ENCODE measurements at regions of chr17 and their contacts with region 1.

Region 1: GRCh38 chr17:72592242-72592966 is 471.6 kb downstream of the SOX9 start:
- DNase-seq: peak; percentile 87 to 90
- H3K4me3 ChIP-seq: peak overlapping the region; percentile 65
- H3K4me3 Mint-ChIP-seq: peak overlapping the region; percentile 74
- H3K27ac Mint-ChIP-seq: peak overlapping the region; percentile 55
- H3K4me1 ChIP-seq: peaks cover 20% of the 10 kb centered on the region
- H3K4me1 Mint-ChIP-seq: peaks cover 25% of the 10 kb centered on the region
- H3K27me3 ChIP-seq: no peaks in the 10 kb centered on the region; the same call in 1 of the 2 replicates
- H3K27me3 Mint-ChIP-seq: peaks cover 3% of the 10 kb centered on the region
- CTCF ChIP-seq: peak in 1 of 2 experiments; percentile 4

Region 2: DNA sequence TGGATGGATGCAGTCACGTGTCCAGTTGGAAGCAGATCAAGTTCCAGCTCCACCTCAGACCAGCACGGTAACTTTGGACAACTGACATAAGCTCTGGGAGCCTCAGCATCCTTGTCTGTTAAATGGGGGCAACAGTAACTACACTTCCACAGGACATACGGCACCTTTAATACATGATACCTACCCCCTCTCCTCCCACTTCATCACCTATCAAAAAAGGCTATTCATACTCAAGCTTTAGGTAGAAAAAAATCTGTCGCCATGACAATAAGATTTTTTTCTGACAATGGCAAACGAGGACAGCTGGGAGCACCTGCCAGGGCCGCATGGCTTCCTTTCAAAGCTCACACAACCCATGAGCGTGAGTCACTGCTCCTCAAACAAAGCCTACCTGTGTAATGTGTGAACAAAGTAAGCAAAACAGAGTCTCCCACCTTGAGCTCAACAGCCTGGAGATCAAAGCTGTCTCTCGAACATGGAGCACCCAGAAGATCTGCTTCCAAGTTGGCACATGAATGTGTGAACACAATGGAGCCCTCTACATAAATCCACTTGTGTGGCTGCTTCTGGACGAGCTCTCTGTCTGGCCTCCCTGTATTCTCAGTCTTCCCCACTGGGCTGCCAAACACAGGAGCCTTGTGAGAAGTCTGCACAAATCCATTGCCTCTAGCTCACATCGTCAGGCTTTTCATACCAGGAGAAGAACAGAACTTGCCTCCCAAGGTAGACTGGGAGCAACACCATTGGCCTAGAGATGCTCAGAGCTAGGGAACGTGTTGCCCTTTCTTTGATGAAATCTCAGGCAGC is 11.9 kb before region 1 on chr17:
- CTCF ChIA-PET with region 1: interaction called, 7 read pairs
- POLR2A ChIA-PET with region 1: interaction called, 24 read pairs
- intact Hi-C with region 1: no loop called
- DNase-seq: peak; percentile 78 to 86
- H3K4me3 ChIP-seq: no peak overlapping the region
- H3K4me3 Mint-ChIP-seq: peak overlapping the region; percentile 7
- H3K27ac Mint-ChIP-seq: peak overlapping the region; percentile 90
- H3K4me1 ChIP-seq: peaks cover 29% of the 10 kb centered on the region
- H3K4me1 Mint-ChIP-seq: peaks cover 36% of the 10 kb centered on the region
- H3K27me3 ChIP-seq: no peaks in the 10 kb centered on the region
- H3K27me3 Mint-ChIP-seq: no peaks in the 10 kb centered on the region
- CTCF ChIP-seq: no peak

Region 3: GRCh38 chr17:72602517-72603419 is 10.4 kb after region 1 on chr17:
- CTCF ChIA-PET with region 1: interaction called, 3 read pairs
- POLR2A ChIA-PET with region 1: interaction called, 7 read pairs
- intact Hi-C with region 1: loop called (anchors 1 kb)
- DNase-seq: peak in 1 of 2 experiments; percentile 53
- H3K4me3 ChIP-seq: no peak overlapping the region
- H3K4me3 Mint-ChIP-seq: no peak overlapping the region
- H3K27ac Mint-ChIP-seq: no peak overlapping the region
- H3K4me1 ChIP-seq: peaks cover 11% of the 10 kb centered on the region
- H3K4me1 Mint-ChIP-seq: peaks cover 16% of the 10 kb centered on the region
- H3K27me3 ChIP-seq: no peaks in the 10 kb centered on the region
- H3K27me3 Mint-ChIP-seq: no peaks in the 10 kb centered on the region
- CTCF ChIP-seq: peak in 1 of 2 experiments; percentile 38

Region 4: GRCh38 chr17:72618001-72618509 is 25.7 kb after region 1 on chr17:
- CTCF ChIA-PET with region 1: interaction called, 4 read pairs
- POLR2A ChIA-PET with region 1: interaction called, 7 read pairs
- intact Hi-C with region 1: loop called (anchors 1 kb)
- DNase-seq: peak; percentile 90 to 97
- H3K4me3 ChIP-seq: peak overlapping the region; percentile 26
- H3K4me3 Mint-ChIP-seq: peak overlapping the region; percentile 78
- H3K27ac Mint-ChIP-seq: peak overlapping the region; percentile 65
- H3K4me1 ChIP-seq: peaks cover 48% of the 10 kb centered on the region
- H3K4me1 Mint-ChIP-seq: peaks cover 53% of the 10 kb centered on the region
- H3K27me3 ChIP-seq: no peaks in the 10 kb centered on the region
- H3K27me3 Mint-ChIP-seq: no peaks in the 10 kb centered on the region
- CTCF ChIP-seq: no peak

Region 5: GRCh38 chr17:72640415-72641165 is 48.2 kb after region 1 on chr17:
- CTCF ChIA-PET with region 1: no interaction called
- POLR2A ChIA-PET with region 1: no interaction called
- intact Hi-C with region 1: loop called (anchors 2 kb)
- DNase-seq: peak; percentile 69 to 76
- H3K4me3 ChIP-seq: peak overlapping the region; percentile 30
- H3K4me3 Mint-ChIP-seq: peak overlapping the region; percentile 72
- H3K27ac Mint-ChIP-seq: peak overlapping the region; percentile 72
- H3K4me1 ChIP-seq: peaks cover 17% of the 10 kb centered on the region
- H3K4me1 Mint-ChIP-seq: no peaks in the 10 kb centered on the region
- H3K27me3 ChIP-seq: no peaks in the 10 kb centered on the region
- H3K27me3 Mint-ChIP-seq: no peaks in the 10 kb centered on the region
- CTCF ChIP-seq: no peak

Region 6: GRCh38 chr17:72683506-72684404 is 91.4 kb after region 1 on chr17:
- CTCF ChIA-PET with region 1: no interaction called
- POLR2A ChIA-PET with region 1: interaction called, 4 read pairs
- intact Hi-C with region 1: loop called (anchors 5 kb)
- DNase-seq: peak; percentile 81 to 90
- H3K4me3 ChIP-seq: no peak overlapping the region
- H3K4me3 Mint-ChIP-seq: peak overlapping the region; percentile 60
- H3K27ac Mint-ChIP-seq: peak overlapping the region; percentile 88
- H3K4me1 ChIP-seq: peaks cover 49% of the 10 kb centered on the region
- H3K4me1 Mint-ChIP-seq: peaks cover 42% of the 10 kb centered on the region
- H3K27me3 ChIP-seq: no peaks in the 10 kb centered on the region
- H3K27me3 Mint-ChIP-seq: no peaks in the 10 kb centered on the region
- CTCF ChIP-seq: no peak

Measured in Caco-2 (cell line).